ENCODE measurements at regions of chr17 and their contacts with region 1.

Region 1: DNA sequence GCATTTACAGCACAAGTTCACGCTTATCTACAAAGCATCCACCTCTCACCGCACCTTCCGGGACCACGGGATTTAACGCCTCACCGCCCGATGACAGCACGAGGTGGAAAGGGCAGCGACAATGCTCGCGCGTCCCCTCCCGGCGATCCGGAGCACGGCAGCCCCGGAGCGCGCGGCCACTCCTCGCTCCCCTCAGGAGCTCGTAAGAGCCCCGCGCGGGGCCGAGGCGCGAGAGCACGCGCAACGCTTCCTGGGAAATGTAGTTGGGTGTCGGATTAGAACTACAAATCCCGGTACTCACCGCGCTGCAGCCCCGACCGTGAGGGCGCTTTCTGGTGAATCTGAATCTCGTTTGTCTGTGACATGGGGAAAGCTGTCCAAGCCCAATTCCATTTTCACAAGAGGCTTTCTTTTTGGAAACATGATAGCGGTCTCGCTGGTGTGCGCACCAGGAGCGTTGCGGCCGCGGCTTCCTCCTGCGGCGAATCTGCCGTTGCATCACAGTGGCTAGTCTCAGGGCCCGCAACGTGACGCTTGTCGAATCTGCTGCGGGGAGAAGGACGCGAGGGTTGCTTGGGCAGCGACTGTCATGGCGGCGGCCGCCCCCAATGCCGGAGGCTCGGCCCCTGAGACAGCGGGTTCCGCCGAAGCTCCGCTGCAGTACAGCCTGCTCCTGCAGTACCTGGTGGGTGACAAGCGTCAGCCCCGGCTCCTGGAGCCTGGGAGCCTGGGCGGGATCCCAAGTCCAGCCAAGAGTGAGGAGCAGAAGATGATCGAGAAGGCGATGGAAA is at the start of gene TIMM22:
- DNase-seq: peak; percentile 99
- ATAC-seq: peak; percentile 91
- H3K4me3 ChIP-seq: peak within 1 kb of the TSS; percentile 44 to 99 (median 97)
- H3K4me3 Mint-ChIP-seq: peak within 1 kb of the TSS; percentile 99
- H3K27ac ChIP-seq: peak within 1 kb of the TSS; percentile 66 to 85
- H3K27ac Mint-ChIP-seq: peak within 1 kb of the TSS; percentile 99
- H3K4me1 ChIP-seq: peaks cover 11 to 23% of the 10 kb centered on the region in 2 donors
- H3K4me1 Mint-ChIP-seq: peaks cover 19% of the 10 kb centered on the region
- H3K27me3 ChIP-seq: no peaks in the 10 kb centered on the region
- H3K27me3 Mint-ChIP-seq: no peaks in the 10 kb centered on the region
- CTCF ChIP-seq: peak; percentile 89
- total RNA-seq, gene TIMM22: 9.5 and 10.0 TPM in 2 replicates

Region 2: DNA sequence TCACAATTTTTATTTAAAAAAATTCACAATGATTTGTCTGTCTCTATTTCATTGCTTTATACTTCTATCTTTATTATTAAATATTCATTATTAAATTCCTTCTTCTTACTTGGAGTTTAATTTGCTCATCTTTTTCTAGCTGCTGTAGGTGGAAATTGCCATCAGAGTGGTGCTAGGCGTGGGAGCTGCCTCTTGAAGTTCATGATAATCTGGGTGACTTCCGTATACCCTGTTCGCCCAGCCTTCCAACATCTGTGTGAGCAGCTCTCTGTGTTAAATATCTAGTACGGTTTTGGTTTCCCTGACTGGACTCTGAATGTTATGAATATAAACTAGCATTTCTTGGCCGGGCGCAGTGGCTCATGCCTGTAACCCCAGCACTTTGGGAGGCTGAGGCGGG is 560.2 kb before region 1 on chr17:
- CTCF ChIA-PET with region 1: no interaction called
- POLR2A ChIA-PET with region 1: no interaction called
- intact Hi-C with region 1: no loop called
- DNase-seq: no peak
- ATAC-seq: no peak
- H3K4me3 ChIP-seq: no peak overlapping the region
- H3K4me3 Mint-ChIP-seq: no peak overlapping the region
- H3K27ac ChIP-seq: no peak overlapping the region
- H3K27ac Mint-ChIP-seq: no peak overlapping the region
- H3K4me1 ChIP-seq: no peaks in the 10 kb centered on the region
- H3K4me1 Mint-ChIP-seq: no peaks in the 10 kb centered on the region
- H3K27me3 ChIP-seq: peaks cover 0 to 8% (median 2%) of the 10 kb centered on the region in 4 experiments
- H3K27me3 Mint-ChIP-seq: peaks cover 15% of the 10 kb centered on the region
- CTCF ChIP-seq: no peak

Region 3: DNA sequence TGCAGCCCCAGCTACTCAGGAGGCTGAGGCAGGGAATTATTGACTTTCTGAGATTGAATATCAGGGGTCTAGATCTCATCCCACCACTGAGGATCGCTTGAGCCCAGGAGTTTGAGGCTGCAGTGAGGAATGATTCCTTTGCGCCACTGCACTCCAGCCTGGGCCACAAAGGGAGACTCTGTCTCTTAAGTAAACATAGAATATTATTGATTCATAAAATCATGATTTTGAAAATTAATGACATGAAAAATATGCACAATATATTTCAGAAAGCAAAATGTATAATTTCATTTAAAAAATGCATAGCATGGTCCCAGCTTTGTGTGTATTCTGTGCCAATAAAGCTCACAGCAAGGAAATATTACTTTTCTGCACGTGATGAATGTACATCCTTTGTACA is 280.5 kb before region 1 on chr17:
- CTCF ChIA-PET with region 1: interaction called, 3 read pairs
- POLR2A ChIA-PET with region 1: no interaction called
- intact Hi-C with region 1: loop called (anchors 2 kb)
- DNase-seq: no peak
- ATAC-seq: no peak
- H3K4me3 ChIP-seq: no peak overlapping the region
- H3K4me3 Mint-ChIP-seq: peak overlapping the region; percentile 45
- H3K27ac ChIP-seq: no peak overlapping the region
- H3K27ac Mint-ChIP-seq: no peak overlapping the region
- H3K4me1 ChIP-seq: peaks cover 4 to 20% of the 10 kb centered on the region in 2 donors
- H3K4me1 Mint-ChIP-seq: peaks cover 24% of the 10 kb centered on the region
- H3K27me3 ChIP-seq: no peaks in the 10 kb centered on the region
- H3K27me3 Mint-ChIP-seq: no peaks in the 10 kb centered on the region
- CTCF ChIP-seq: no peak

Region 4: DNA sequence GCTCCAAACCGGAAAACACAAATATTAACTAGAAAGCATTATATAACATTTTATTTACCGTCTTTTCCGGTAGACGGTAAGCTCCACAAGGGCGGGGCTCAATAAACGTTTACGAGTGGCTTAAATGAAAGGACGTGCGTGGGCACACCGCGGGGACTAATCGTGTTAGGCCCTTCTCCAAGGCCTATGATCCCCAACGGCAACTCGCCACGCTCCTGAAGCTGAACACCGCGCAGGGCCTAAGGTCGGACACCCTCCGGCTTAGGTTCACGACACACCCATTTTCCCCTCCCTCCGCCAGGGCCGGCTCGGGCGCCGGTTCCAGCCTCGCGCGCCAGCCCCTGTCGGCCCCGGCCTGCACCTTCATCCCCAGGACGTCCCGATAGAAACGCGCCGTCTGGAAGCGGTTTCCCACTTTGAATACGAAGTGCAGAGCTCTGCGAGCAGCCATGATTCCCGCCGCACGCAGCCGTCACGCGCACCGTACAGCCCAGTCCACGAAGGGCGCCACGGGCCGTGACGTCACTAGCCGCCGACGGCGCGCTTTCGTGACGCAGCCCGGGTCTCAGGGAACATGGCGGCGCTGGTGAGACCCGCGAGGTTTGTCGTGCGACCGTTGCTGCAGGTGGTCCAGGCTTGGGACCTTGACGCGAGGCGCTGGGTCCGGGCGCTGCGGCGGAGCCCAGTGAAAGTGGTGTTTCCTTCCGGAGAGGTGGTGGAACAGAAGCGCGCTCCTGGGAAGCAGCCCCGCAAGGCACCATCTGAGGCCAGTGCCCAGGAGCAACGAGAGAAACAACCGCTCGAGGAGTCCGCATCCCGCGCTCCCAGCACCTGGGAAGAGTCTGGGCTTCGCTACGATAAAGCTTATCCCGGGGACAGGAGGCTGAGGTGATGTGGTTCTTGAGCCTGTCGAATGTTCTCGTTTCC is 214.7 kb before region 1 on chr17 and contains the starts of genes GLOD4 and MRM3:
- CTCF ChIA-PET with region 1: interaction called, 16 read pairs
- POLR2A ChIA-PET with region 1: no interaction called
- intact Hi-C with region 1: loop called (anchors 1 kb)
- DNase-seq: peak; percentile 96
- ATAC-seq: peak; percentile 95
- H3K4me3 ChIP-seq: peak within 1 kb of the TSS; percentile 79 to 100 (median 93)
- H3K4me3 Mint-ChIP-seq: peak within 1 kb of the TSS; percentile 97
- H3K27ac ChIP-seq: peak within 1 kb of the TSS; percentile 83 to 95
- H3K27ac Mint-ChIP-seq: peak within 1 kb of the TSS; percentile 97
- H3K4me1 ChIP-seq: peaks cover 16 to 20% of the 10 kb centered on the region in 2 donors
- H3K4me1 Mint-ChIP-seq: peaks cover 27% of the 10 kb centered on the region
- H3K27me3 ChIP-seq: no peaks in the 10 kb centered on the region
- H3K27me3 Mint-ChIP-seq: no peaks in the 10 kb centered on the region
- CTCF ChIP-seq: no peak
- total RNA-seq, gene GLOD4: 69.3 and 77.4 TPM in 2 replicates
- total RNA-seq, gene MRM3: 20.9 and 28.4 TPM in 2 replicates

Region 5: GRCh38 chr17:879549-880442 is 117.0 kb before region 1 on chr17:
- CTCF ChIA-PET with region 1: interaction called, 11 read pairs
- POLR2A ChIA-PET with region 1: no interaction called
- intact Hi-C with region 1: no loop called
- DNase-seq: peak; percentile 78
- ATAC-seq: peak; percentile 53
- H3K4me3 ChIP-seq: no peak overlapping the region
- H3K4me3 Mint-ChIP-seq: no peak overlapping the region
- H3K27ac ChIP-seq: no peak overlapping the region
- H3K27ac Mint-ChIP-seq: no peak overlapping the region
- H3K4me1 ChIP-seq: no peaks in the 10 kb centered on the region
- H3K4me1 Mint-ChIP-seq: peaks cover 5% of the 10 kb centered on the region
- H3K27me3 ChIP-seq: peaks cover 0 to 6% (median 0%) of the 10 kb centered on the region in 4 experiments
- H3K27me3 Mint-ChIP-seq: peaks cover 27% of the 10 kb centered on the region
- CTCF ChIP-seq: peak; percentile 71